ENCODE measurements at regions of chr15 and their contacts with region 1.

Region 1: DNA sequence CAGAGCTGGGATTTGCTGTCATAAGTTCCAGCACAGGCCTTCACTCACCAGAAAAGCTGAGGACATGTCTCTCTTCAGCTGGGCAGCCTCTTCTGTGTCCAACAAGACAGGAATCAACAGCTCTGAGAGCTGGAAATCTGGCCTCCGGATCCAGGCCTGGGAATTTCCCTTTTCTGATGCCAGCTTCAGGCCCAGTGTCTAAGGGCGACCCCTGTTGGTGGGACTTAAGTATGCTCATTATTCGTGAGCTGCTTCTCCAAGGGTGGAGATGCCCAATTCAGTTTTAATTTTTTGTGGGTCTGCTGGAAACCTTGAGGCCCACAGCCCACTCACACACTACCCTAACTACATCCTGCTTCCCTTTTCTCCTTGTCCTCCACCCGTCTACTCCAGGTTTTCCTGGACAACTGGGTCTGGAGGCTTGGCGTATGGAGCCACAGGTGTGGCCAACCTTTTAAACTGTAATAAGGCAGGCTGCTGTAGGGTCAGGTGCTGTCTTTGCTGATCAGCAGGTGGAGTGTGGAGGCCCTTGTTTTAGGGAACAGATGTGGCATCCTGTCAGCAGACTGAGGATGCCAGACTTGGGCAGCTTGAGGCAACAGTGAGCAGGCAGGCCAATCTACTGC is 2.6 kb upstream of the CEMIP start:
- DNase-seq: peak; percentile 65 to 79
- H3K4me3 ChIP-seq: no peak overlapping the region
- H3K4me3 Mint-ChIP-seq: no peak overlapping the region
- H3K27ac Mint-ChIP-seq: no peak overlapping the region
- H3K4me1 ChIP-seq: no peaks in the 10 kb centered on the region
- H3K4me1 Mint-ChIP-seq: peaks cover 5% of the 10 kb centered on the region
- H3K27me3 ChIP-seq: no peaks in the 10 kb centered on the region; the same call in 1 of the 2 replicates
- H3K27me3 Mint-ChIP-seq: peaks cover 8% of the 10 kb centered on the region
- CTCF ChIP-seq: peak; percentile 77 to 84

Region 2: DNA sequence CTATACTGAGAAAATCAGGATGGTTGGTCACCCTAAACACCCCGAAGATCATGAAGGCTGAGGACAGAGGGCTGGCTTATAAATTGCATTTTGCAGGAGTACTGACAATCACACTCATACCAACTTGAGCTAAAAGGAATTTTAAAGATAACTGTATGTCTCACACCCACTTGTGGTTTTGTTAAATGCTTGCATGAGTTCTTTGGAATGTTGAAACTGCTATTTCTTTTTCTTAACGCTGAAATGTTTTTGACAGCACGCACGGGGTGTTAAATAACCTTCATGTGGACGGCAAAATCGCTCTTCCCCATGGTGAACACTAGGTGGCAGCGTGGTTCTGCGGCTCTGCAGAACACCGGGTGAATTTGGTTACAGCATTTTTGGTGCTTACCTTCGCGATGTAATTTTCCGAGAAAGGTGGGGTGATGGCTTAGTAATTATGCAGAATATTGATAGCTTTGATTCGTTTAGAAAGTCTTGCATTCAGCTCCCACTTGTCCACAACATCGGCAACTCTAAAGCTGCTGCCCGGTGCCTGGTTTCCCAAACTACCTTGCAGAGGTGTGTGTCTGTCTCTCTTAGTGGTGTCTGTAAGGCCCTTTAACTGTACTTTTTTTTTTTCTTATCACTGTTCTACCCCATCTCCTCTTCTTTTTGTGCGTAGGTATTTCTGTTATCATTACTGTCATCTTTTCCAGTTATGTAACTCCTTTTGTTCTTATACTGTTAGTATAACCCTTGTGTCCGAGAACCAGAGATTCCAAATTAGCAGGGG is 320.7 kb before region 1 on chr15:
- CTCF ChIA-PET with region 1: interaction called, 7 read pairs
- POLR2A ChIA-PET with region 1: no interaction called
- intact Hi-C with region 1: loop called (anchors 1 kb)
- DNase-seq: peak in 1 of 2 experiments; percentile 60
- H3K4me3 ChIP-seq: no peak overlapping the region
- H3K4me3 Mint-ChIP-seq: no peak overlapping the region
- H3K27ac Mint-ChIP-seq: no peak overlapping the region
- H3K4me1 ChIP-seq: peaks cover 7% of the 10 kb centered on the region; the same call in 1 of the 2 replicates
- H3K4me1 Mint-ChIP-seq: peaks cover 6% of the 10 kb centered on the region
- H3K27me3 ChIP-seq: no peaks in the 10 kb centered on the region
- H3K27me3 Mint-ChIP-seq: peaks cover 8% of the 10 kb centered on the region
- CTCF ChIP-seq: peak; percentile 84 to 93

Region 3: GRCh38 chr15:80619680-80620079 is 156.9 kb before region 1 on chr15:
- CTCF ChIA-PET with region 1: interaction called, 12 read pairs
- POLR2A ChIA-PET with region 1: no interaction called
- intact Hi-C with region 1: loop called (anchors 1 kb)
- DNase-seq: peak in 1 of 2 experiments; percentile 13
- H3K4me3 ChIP-seq: no peak overlapping the region
- H3K4me3 Mint-ChIP-seq: no peak overlapping the region
- H3K27ac Mint-ChIP-seq: no peak overlapping the region
- H3K4me1 ChIP-seq: no peaks in the 10 kb centered on the region
- H3K4me1 Mint-ChIP-seq: no peaks in the 10 kb centered on the region
- H3K27me3 ChIP-seq: no peaks in the 10 kb centered on the region
- H3K27me3 Mint-ChIP-seq: peaks cover 10% of the 10 kb centered on the region
- CTCF ChIP-seq: peak in 1 of 2 experiments; percentile 23

Region 4: GRCh38 chr15:80695104-80695910 is 81.2 kb before region 1 on chr15 and contains the start of gene ABHD17C:
- CTCF ChIA-PET with region 1: interaction called, 14 read pairs
- POLR2A ChIA-PET with region 1: no interaction called
- intact Hi-C with region 1: no loop called
- DNase-seq: peak; percentile 43 to 73
- H3K4me3 ChIP-seq: peak within 1 kb of the TSS; percentile 86
- H3K4me3 Mint-ChIP-seq: peak within 1 kb of the TSS; percentile 86
- H3K27ac Mint-ChIP-seq: peak within 1 kb of the TSS; percentile 63
- H3K4me1 ChIP-seq: peaks cover 15% of the 10 kb centered on the region
- H3K4me1 Mint-ChIP-seq: peaks cover 23% of the 10 kb centered on the region
- H3K27me3 ChIP-seq: no peaks in the 10 kb centered on the region
- H3K27me3 Mint-ChIP-seq: no peaks in the 10 kb centered on the region
- CTCF ChIP-seq: no peak
- total RNA-seq, gene ABHD17C: 19.2 and 25.0 TPM in 2 replicates

Region 5: GRCh38 chr15:80736560-80736959 is 40.0 kb before region 1 on chr15:
- CTCF ChIA-PET with region 1: no interaction called
- POLR2A ChIA-PET with region 1: no interaction called
- intact Hi-C with region 1: no loop called
- DNase-seq: no peak
- H3K4me3 ChIP-seq: no peak overlapping the region
- H3K4me3 Mint-ChIP-seq: no peak overlapping the region
- H3K27ac Mint-ChIP-seq: no peak overlapping the region
- H3K4me1 ChIP-seq: no peaks in the 10 kb centered on the region
- H3K4me1 Mint-ChIP-seq: peaks cover 6% of the 10 kb centered on the region
- H3K27me3 ChIP-seq: no peaks in the 10 kb centered on the region
- H3K27me3 Mint-ChIP-seq: no peaks in the 10 kb centered on the region
- CTCF ChIP-seq: no peak